A549 (cell line): ENCODE measurements at regions of chr2 and their contacts with region 1.

Region 1: DNA sequence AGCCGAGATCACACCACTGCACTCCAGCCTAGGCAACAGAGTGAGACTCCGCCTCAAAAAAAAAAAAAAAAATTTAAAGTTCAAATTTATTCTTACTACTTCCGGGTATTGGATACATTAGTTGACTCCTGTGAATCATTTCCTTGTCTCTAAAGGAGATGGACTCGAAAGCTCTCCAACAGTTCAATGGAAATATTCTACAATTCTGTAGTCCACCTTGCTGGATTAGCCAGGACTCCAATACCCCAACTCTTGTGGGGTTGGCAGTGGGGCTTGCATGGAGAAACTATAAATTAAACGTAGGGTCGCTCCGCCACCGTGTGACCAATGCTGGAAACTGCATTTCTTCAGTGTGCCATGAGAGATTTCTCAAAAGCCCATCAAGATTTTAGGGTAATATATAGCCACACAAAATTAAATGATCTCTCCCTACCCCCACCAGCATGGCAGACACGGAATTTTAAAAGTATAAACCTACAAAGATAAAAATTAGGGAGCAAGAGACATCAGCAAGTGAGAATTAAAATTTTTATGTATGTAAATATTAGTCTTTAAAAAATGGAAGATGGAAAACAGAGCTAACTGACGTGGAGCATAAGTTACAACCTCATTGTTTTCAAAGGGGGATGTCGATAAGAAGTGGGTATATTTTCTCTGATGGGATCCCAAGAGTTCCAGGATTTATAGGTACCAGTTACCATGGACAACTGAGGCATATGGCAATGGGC is 27.8 kb upstream of the GAREM2 start:
- DNase-seq: peak; percentile 77 to 79
- ATAC-seq: peak; percentile 57 to 61; a peak in 5 of 6 replicates
- H3K4me3 ChIP-seq: no peak overlapping the region
- H3K27ac ChIP-seq: peak overlapping the region; percentile 64 to 76
- H3K4me1 ChIP-seq: peaks cover 25% of the 10 kb centered on the region
- CTCF ChIP-seq: peak; percentile 98
- EP300 ChIP-seq: no peak
- POLR2A ChIP-seq: no peak
- RAD21 ChIP-seq: peak; percentile 98 to 99

Region 2: DNA sequence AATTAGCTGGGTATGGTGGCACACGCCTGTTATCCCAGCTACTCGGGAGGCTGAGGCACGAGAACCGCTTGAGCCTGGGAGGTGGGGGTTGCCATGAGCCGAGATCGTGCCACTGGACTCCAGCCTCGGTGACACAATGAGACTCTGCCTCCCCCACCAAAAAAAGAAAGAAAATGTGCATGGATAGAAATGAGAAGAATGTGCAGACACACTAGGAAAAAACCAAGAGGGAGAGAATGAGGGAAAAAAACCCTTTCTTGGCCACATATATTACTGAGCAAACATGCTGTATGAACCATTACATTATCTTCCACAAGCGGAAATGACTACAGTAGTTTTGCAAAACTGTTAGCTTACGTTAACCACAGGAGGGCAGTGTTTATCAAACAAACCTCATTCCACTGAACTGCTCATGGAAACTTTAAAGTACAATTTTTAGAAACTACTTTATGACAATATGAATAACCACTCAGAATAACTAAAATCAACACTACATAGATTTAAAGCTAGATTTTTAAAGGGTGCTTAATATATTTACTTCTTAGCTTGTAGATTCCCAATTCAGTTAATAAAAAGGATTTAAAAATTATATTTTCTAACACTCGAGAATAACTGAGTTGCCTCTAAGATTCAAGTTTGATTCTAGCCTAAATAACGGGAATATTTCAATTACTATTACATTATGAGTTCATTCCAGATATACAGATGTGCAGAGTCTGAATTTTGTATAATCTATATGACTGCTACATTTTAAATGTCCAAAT is 293.2 kb before region 1 on chr2:
- CTCF ChIA-PET with region 1: interaction called, 45 read pairs
- POLR2A ChIA-PET with region 1: no interaction called
- DNase-seq: peak; percentile 68 to 87
- ATAC-seq: peak; percentile 93 to 94
- H3K4me3 ChIP-seq: 0 out of 3 replicates have a peak overlapping the region, but pooled peaks have one; percentile 16
- H3K27ac ChIP-seq: peak overlapping the region; percentile 62 to 86
- H3K4me1 ChIP-seq: peaks cover 15% of the 10 kb centered on the region; the same call in 2 of the 3 replicates
- CTCF ChIP-seq: peak; percentile 97
- EP300 ChIP-seq: no peak
- POLR2A ChIP-seq: no peak
- RAD21 ChIP-seq: peak; percentile 86 to 87

Region 3: DNA sequence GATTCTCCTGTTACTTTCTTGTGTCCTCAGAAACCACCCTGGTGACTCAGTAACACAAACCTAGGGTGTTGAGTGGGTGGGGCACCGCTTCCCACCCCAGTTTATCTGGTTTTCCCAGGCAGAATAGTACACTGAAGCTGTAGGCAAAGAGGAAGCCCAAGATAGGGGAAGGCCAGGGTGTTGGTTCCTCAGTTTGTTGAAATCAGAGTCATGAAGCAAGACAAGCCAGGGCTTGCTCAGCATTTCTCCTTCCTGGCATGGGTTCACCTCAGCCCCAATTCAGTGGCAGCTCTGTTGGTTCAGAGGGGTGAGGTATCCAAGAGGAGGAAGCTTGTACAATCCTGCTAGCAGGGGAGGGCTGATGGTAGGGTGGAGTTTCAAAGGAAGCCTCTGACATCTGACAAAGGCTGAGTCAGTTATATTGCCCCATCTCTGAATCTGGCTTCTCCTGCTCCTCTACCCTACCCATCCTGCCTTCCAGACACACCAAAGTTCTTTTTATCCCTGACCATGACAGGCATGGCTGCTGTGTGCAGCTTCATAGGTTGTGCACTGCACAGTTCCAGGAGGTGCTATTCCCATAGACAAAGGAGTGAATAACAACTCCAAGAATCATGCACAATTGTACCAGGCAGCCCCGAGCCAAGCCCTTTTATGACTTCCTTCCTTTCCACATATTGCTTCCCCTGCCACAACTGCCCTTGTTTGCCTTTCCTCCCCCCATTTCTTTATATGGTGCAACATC is 136.1 kb before region 1 on chr2:
- CTCF ChIA-PET with region 1: interaction called, 18 read pairs
- POLR2A ChIA-PET with region 1: no interaction called
- DNase-seq: peak; percentile 68 to 91
- ATAC-seq: peak; percentile 46 to 55
- H3K4me3 ChIP-seq: no peak overlapping the region
- H3K27ac ChIP-seq: peak overlapping the region; percentile 90 to 93
- H3K4me1 ChIP-seq: peaks cover 52% of the 10 kb centered on the region
- CTCF ChIP-seq: no peak
- EP300 ChIP-seq: peak; percentile 50 to 74; a peak in 2 of 5 replicates
- POLR2A ChIP-seq: no peak
- RAD21 ChIP-seq: peak in 1 of 2 experiments; percentile 26; a peak in 2 of 5 replicates

Region 4: GRCh38 chr2:26099933-26100332 is 45.2 kb before region 1 on chr2:
- CTCF ChIA-PET with region 1: interaction called, 12 read pairs
- POLR2A ChIA-PET with region 1: interaction called, 13 read pairs
- DNase-seq: no peak
- ATAC-seq: no peak
- H3K4me3 ChIP-seq: no peak overlapping the region
- H3K27ac ChIP-seq: no peak overlapping the region
- H3K4me1 ChIP-seq: peaks cover 23% of the 10 kb centered on the region
- CTCF ChIP-seq: no peak
- EP300 ChIP-seq: no peak
- POLR2A ChIP-seq: no peak
- RAD21 ChIP-seq: no peak

Region 5: GRCh38 chr2:26118682-26119081 is 26.4 kb before region 1 on chr2:
- CTCF ChIA-PET with region 1: interaction called, 10 read pairs
- POLR2A ChIA-PET with region 1: no interaction called
- DNase-seq: no peak
- ATAC-seq: peak; percentile 15 to 32; a peak in 2 of 6 replicates
- H3K4me3 ChIP-seq: no peak overlapping the region
- H3K27ac ChIP-seq: no peak overlapping the region
- H3K4me1 ChIP-seq: no peaks in the 10 kb centered on the region; the same call in 2 of the 3 replicates
- CTCF ChIP-seq: no peak
- EP300 ChIP-seq: no peak
- POLR2A ChIP-seq: no peak
- RAD21 ChIP-seq: no peak

Region 6: GRCh38 chr2:26184555-26185303 is 39.6 kb after region 1 on chr2:
- CTCF ChIA-PET with region 1: interaction called, 15 read pairs
- POLR2A ChIA-PET with region 1: no interaction called
- DNase-seq: peak; percentile 86 to 94
- ATAC-seq: peak; percentile 77 to 85
- H3K4me3 ChIP-seq: peak overlapping the region; percentile 64
- H3K27ac ChIP-seq: peak overlapping the region; percentile 84 to 93
- H3K4me1 ChIP-seq: peaks cover 7% of the 10 kb centered on the region; the same call in 2 of the 3 replicates
- CTCF ChIP-seq: peak; percentile 95
- EP300 ChIP-seq: no peak
- POLR2A ChIP-seq: peak; percentile 33
- RAD21 ChIP-seq: peak; percentile 47 to 62; a peak in 3 of 5 replicates

Region 7: GRCh38 chr2:26284136-26284535 is 139.0 kb after region 1 on chr2:
- CTCF ChIA-PET with region 1: no interaction called
- POLR2A ChIA-PET with region 1: no interaction called
- DNase-seq: no peak
- ATAC-seq: peak in 1 of 2 experiments; percentile 55; a peak in 1 of 6 replicates
- H3K4me3 ChIP-seq: no peak overlapping the region
- H3K27ac ChIP-seq: no peak overlapping the region
- H3K4me1 ChIP-seq: peaks cover 6% of the 10 kb centered on the region; the same call in 2 of the 3 replicates
- CTCF ChIP-seq: no peak
- EP300 ChIP-seq: no peak
- POLR2A ChIP-seq: no peak
- RAD21 ChIP-seq: no peak